AG04449 (cell line): ENCODE measurements at regions of chr22 and their contacts with region 1.

Region 1: GRCh38 chr22:42673898-42674401 is 24.8 kb upstream of the CYB5R3 start:
- DNase-seq: no peak
- H3K4me3 ChIP-seq: no peak overlapping the region
- CTCF ChIP-seq: no peak

Region 2: DNA sequence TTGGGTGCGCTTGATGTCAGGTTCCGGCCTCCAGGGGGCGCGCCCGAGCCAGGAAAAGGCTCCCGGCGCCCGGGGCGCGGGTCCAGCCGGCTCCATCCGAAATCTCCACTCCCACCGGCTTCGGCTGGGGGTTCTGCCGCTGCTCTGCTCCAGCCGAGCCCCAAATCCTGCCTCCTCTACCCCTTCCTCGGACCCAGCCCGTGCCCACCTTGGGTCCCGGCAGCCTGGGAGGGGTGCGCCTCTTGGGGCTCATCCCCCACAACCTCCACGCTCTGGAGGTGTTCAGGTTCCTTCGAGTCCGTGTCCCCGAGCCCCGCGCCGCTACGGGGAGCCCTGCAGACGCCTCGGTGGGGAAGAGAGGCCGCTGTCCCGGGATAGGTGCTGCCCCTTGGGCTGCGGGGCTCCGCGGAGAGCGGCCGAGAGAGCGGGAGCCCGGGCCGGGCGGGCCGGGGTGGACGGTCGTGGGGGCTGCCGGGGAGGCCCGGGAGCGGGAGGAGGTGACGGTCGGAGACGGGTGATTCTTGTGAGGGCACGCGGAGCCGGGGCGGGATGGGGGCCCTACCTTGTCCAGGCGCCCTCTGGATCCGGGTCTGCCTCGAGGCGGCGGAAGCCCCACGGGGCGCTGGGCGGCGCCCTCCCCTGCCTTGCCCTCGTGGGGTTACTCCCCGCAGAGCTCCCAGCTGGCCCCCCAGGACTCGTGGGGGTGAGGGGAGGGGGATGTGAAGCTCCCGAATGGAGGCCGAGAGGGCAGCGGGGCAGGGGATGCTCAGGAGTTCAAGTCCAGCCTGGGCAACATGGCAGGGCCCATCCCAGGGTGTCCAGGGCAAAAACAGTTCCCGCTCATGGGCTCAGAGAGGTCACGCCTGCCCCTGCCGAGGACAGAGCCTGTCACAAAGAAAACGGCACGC is 11.6 kb before region 1 on chr22:
- CTCF ChIA-PET with region 1: interaction called, 13 read pairs
- POLR2A ChIA-PET with region 1: no interaction called
- DNase-seq: no peak
- H3K4me3 ChIP-seq: peak overlapping the region; percentile 68
- CTCF ChIP-seq: peak; percentile 77

Region 3: GRCh38 chr22:42688241-42689211 is 14.6 kb after region 1 on chr22:
- CTCF ChIA-PET with region 1: no interaction called
- POLR2A ChIA-PET with region 1: no interaction called
- DNase-seq: peak; percentile 60
- H3K4me3 ChIP-seq: no peak overlapping the region
- CTCF ChIP-seq: no peak

Region 4: DNA sequence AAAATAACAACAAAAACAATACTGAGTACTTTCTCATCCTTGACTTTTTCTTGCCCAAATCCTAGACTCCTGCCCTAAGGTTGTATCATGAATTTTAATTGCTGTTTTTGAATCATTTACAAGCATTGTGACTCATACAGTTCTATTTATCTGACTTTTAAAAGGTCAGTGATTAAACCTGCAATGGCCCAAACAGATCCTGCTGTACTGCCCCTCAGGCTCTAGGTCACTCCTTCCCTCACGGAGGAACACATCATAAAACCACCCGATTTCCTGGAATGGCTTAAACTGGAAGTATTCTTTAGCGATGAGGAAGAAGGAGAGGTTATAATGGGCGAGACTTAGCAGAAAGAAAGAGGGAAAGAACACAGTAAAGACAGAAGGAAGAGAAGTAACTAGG is 170.8 kb after region 1 on chr22:
- CTCF ChIA-PET with region 1: no interaction called
- POLR2A ChIA-PET with region 1: no interaction called
- DNase-seq: no peak
- H3K4me3 ChIP-seq: no peak overlapping the region
- CTCF ChIP-seq: no peak